MCF 10A (cell line): ENCODE measurements at regions of chr20 and their contacts with region 1.

Region 1: GRCh38 chr20:35410613-35411012 is 1.2 kb downstream of the UQCC1 start:
- DNase-seq: no peak
- H3K4me3 Mint-ChIP-seq: peak overlapping the region; percentile 99
- H3K27ac Mint-ChIP-seq: peak overlapping the region; percentile 99
- H3K4me1 Mint-ChIP-seq: peaks cover 7% of the 10 kb centered on the region
- H3K27me3 Mint-ChIP-seq: no peaks in the 10 kb centered on the region
- CTCF ChIP-seq: no peak

Region 2: DNA sequence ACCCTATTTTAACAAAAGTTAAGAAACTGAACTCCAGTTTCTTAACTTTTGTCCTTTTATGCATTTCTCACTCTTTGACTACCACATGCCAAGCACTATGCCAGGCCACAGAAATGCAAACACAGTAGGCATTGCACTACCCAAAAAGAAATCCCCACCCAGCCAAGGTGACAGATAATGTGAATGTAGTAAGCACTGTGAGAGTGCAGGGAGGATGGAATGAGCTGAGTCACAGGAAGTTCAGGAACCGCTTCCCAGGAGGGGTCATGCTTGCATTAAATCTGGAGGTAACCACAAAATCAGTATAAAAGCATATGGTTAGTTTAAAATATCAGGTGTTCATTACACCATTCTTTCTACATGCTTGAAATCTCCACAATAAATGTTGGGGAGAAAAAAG is 98.3 kb before region 1 on chr20:
- CTCF ChIA-PET with region 1: interaction called, 4 read pairs
- POLR2A ChIA-PET with region 1: interaction called, 63 read pairs
- intact Hi-C with region 1: no loop called
- DNase-seq: peak; percentile 96
- H3K4me3 Mint-ChIP-seq: peak overlapping the region; percentile 4
- H3K27ac Mint-ChIP-seq: peak overlapping the region; percentile 74
- H3K4me1 Mint-ChIP-seq: peaks cover 55% of the 10 kb centered on the region
- H3K27me3 Mint-ChIP-seq: no peaks in the 10 kb centered on the region
- CTCF ChIP-seq: no peak

Region 3: GRCh38 chr20:35387334-35387733 is 23.3 kb before region 1 on chr20:
- CTCF ChIA-PET with region 1: interaction called, 4 read pairs
- POLR2A ChIA-PET with region 1: interaction called, 16 read pairs
- intact Hi-C with region 1: no loop called
- DNase-seq: peak; percentile 83
- H3K4me3 Mint-ChIP-seq: no peak overlapping the region
- H3K27ac Mint-ChIP-seq: no peak overlapping the region
- H3K4me1 Mint-ChIP-seq: peaks cover 13% of the 10 kb centered on the region
- H3K27me3 Mint-ChIP-seq: no peaks in the 10 kb centered on the region
- CTCF ChIP-seq: no peak

Region 4: DNA sequence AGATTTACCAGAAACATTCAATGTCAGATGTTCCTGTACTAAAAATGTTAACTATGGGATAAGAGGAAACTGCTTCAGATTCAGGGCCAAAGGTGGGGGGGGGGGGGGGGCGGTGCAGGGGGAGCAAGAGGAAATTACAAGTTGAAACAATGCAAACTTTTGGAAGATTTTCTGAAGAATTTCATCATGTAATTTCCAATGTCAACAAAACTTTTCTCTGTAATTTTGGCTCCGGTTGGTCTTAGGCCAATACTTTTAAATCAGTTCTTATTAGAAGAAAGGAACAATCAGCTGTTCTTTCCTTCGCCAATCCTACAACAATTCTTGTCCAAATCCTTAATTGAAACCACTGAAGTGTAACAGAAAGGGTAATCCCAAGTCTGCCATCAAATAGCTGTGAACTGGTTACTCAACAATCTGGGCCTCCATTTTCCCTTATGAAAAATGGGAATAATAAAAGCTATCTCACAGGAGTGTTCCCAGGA is 11.9 kb before region 1 on chr20:
- CTCF ChIA-PET with region 1: interaction called, 3 read pairs
- POLR2A ChIA-PET with region 1: interaction called, 16 read pairs
- intact Hi-C with region 1: no loop called
- DNase-seq: no peak
- H3K4me3 Mint-ChIP-seq: no peak overlapping the region
- H3K27ac Mint-ChIP-seq: no peak overlapping the region
- H3K4me1 Mint-ChIP-seq: no peaks in the 10 kb centered on the region
- H3K27me3 Mint-ChIP-seq: no peaks in the 10 kb centered on the region
- CTCF ChIP-seq: no peak

Region 5: GRCh38 chr20:35432430-35432735 is 21.8 kb after region 1 on chr20:
- CTCF ChIA-PET with region 1: no interaction called
- POLR2A ChIA-PET with region 1: interaction called, 12 read pairs
- intact Hi-C with region 1: no loop called
- DNase-seq: no peak
- H3K4me3 Mint-ChIP-seq: no peak overlapping the region
- H3K27ac Mint-ChIP-seq: no peak overlapping the region
- H3K4me1 Mint-ChIP-seq: no peaks in the 10 kb centered on the region
- H3K27me3 Mint-ChIP-seq: no peaks in the 10 kb centered on the region
- CTCF ChIP-seq: no peak